ENCODE measurements at regions of chr7 and their contacts with region 1.

Region 1: GRCh38 chr7:124032369-124033094 is at the start of gene TMEM229A:
- DNase-seq: peak; percentile 38 to 95 (median 57)

Region 2: DNA sequence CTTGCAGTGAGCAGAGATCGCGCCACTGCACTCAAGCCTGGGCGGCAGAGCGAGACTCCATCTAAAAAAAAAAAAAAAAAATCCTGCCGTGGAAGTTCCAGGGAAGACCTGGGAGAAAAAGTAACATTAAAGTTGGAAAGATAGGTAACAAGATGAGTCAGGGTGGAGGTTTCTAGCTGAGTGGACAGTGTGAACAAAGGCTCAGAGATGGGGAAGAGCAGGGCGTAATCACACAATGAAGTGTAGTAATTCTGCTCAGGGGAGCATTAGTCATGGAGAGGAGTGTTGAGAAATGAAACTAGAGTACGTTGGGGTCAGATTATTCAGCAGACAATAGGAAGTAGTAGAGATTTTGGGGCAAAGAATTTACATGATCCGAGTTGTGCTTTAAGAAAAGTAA is 262.2 kb before region 1 on chr7:
- intact Hi-C with region 1: no loop called
- DNase-seq: no peak

Region 3: GRCh38 chr7:124085179-124085578 is 52.6 kb after region 1 on chr7:
- intact Hi-C with region 1: loop called (anchors 2 kb)
- DNase-seq: peak in 7 of 10 donors; percentile 47 to 87 (median 64)

Measured in posterior cingulate gyrus (tissue), 11 donors.